GM12878 (cell line): ENCODE measurements at regions of chr16 and their contacts with region 1.

Region 1: GRCh38 chr16:8660841-8661301 is 13.5 kb upstream of the ABAT start:
- DNase-seq: no peak
- ATAC-seq: peak; percentile 86
- H3K4me3 ChIP-seq: no peak overlapping the region
- H3K27ac ChIP-seq: no peak overlapping the region
- H3K4me1 ChIP-seq: peaks cover under 1% of the 10 kb centered on the region; the same call in 1 of the 2 replicates
- H3K27me3 ChIP-seq: no peaks in the 10 kb centered on the region
- CTCF ChIP-seq: peak; percentile 42 to 69 (median 59)
- EP300 ChIP-seq: no peak
- POLR2A ChIP-seq: no peak
- RAD21 ChIP-seq: peak; percentile 75

Region 2: GRCh38 chr16:8697965-8698364 is 37.1 kb after region 1 on chr16:
- CTCF ChIA-PET with region 1: no interaction called
- POLR2A ChIA-PET with region 1: no interaction called
- RAD21 ChIA-PET with region 1: no interaction called
- SMC1A ChIA-PET with region 1: no interaction called
- in situ Hi-C with region 1: no loop called
- intact Hi-C with region 1: no loop called
- DNase-seq: no peak
- ATAC-seq: no peak
- H3K4me3 ChIP-seq: no peak overlapping the region
- H3K27ac ChIP-seq: no peak overlapping the region
- H3K4me1 ChIP-seq: no peaks in the 10 kb centered on the region
- H3K27me3 ChIP-seq: no peaks in the 10 kb centered on the region
- CTCF ChIP-seq: no peak
- EP300 ChIP-seq: no peak
- POLR2A ChIP-seq: no peak
- RAD21 ChIP-seq: no peak

Region 3: GRCh38 chr16:8868416-8869211 is 207.7 kb after region 1 on chr16 and contains the start of gene CARHSP1:
- CTCF ChIA-PET with region 1: interaction called, 4 read pairs
- POLR2A ChIA-PET with region 1: interaction called, 4 read pairs
- RAD21 ChIA-PET with region 1: interaction called, 11 read pairs
- SMC1A ChIA-PET with region 1: interaction called, 6 read pairs
- in situ Hi-C with region 1: no loop called
- intact Hi-C with region 1: no loop called
- DNase-seq: peak; percentile 51
- ATAC-seq: peak; percentile 82
- H3K4me3 ChIP-seq: peak within 1 kb of the TSS; percentile 95
- H3K27ac ChIP-seq: peak within 1 kb of the TSS; percentile 90
- H3K4me1 ChIP-seq: peaks cover 32% of the 10 kb centered on the region
- H3K27me3 ChIP-seq: no peaks in the 10 kb centered on the region
- CTCF ChIP-seq: no peak
- EP300 ChIP-seq: no peak
- POLR2A ChIP-seq: peak; percentile 79
- RAD21 ChIP-seq: no peak
- polyA plus RNA-seq, gene CARHSP1: 5.5 to 8.4 TPM